ENCODE measurements at regions of chr22 and their contacts with region 1.

Region 1: DNA sequence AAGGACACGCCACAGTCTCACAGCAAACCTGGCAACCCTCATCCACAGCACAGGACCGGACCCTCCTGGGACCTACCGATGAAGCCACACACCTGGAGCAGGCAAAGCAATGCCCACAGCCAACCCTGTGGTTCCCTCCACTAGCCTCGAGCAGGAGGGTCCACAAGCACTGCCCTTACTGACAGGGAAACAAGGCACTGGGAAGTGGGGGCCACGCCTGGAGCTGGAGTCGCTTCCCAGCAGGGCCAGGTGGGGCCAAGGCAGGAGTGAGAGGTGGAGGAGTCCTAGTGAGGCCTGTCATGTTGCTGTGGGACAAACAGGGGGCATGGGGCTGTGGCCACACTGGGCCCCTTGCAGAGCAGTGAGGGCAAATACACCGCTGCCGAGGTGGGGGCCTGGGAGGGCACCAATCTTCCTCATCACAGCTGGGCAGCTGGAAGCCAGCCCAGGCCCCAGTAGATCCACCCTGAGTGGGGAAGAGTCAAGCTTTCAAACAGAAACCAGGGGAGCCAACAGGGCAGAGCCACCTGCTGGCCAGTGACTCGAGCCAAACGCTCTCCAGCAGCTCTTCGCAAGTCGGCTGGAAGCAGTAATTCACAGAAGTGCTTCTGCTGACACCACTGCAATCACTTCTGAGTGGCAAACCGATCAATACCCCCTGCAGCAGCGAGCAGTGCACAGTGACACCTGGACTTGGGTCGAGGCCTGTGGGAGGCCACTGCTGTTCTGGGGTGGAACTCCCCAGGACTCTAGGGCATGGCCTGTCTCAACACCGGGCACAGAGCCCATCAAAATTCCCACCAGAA is 13.7 kb downstream of the SULT4A1 start:
- DNase-seq: no peak
- H3K4me3 ChIP-seq: no peak overlapping the region
- H3K27ac ChIP-seq: peak overlapping the region; percentile 39; the same call in 1 of the 2 replicates
- H3K4me1 ChIP-seq: peaks cover 0 to 16% (median 2%) of the 10 kb centered on the region in 4 experiments; a peak in 5 of 7 replicates
- H3K27me3 ChIP-seq: no peaks in the 10 kb centered on the region
- CTCF ChIP-seq: peak; percentile 56 to 76 (median 67)
- EP300 ChIP-seq: no peak
- POLR2A ChIP-seq: no peak
- RAD21 ChIP-seq: peak; percentile 26 to 44

Region 2: DNA sequence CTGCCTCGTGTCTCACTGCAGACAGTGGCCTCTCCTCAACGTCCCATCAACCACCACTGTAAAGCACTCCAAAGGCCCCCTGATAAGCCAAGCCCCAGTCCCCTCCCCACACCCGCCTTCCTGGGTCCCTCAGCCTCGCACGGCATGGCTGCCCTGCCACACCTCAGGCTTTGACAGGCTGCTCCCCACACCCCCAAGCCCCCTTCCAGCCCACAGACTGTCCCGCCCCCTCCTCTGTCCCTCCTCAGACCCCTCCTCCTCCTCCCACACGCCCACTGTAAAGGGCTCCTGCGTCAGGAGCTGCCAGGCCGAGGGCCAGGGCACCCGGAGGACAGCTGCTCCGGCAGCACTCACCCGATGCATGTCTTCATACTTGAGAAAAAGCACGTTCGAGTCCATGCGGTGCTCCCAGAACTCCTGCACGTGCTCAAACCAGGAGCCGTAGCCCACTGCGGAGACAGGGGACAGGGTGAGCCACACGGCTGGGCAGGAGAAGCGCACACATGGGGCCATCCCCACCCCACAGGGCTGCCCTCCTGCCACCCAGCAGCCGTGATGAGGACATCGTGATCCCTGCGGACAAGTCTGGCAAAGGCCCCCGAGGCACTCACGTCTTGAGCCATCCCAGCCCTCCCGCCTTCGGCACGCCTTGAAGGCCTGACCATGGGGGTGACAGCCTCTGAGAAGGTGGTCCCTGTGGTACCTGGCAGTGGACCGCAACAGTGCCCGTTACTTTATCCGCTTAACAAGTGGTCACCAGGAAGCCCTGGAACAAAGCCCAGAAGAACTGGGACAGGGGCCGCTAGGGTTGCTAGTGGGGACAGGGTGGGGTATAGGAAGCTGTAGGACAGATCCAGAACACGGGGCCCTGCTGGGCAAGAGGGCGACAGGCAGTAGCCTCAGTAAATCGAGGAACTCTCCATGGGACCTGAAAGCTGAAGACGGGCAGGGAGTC is 15.0 kb before region 1 on chr22:
- CTCF ChIA-PET with region 1: interaction called, 9 read pairs
- POLR2A ChIA-PET with region 1: interaction called, 12 read pairs
- DNase-seq: no peak
- H3K4me3 ChIP-seq: no peak overlapping the region
- H3K27ac ChIP-seq: peak overlapping the region; percentile 25; the same call in 1 of the 2 replicates
- H3K4me1 ChIP-seq: peaks cover 0 to 3% (median 0%) of the 10 kb centered on the region in 4 experiments; a peak in 4 of 7 replicates
- H3K27me3 ChIP-seq: no peaks in the 10 kb centered on the region
- CTCF ChIP-seq: no peak
- EP300 ChIP-seq: no peak
- POLR2A ChIP-seq: no peak
- RAD21 ChIP-seq: no peak